ENCODE measurements at regions of chr6 and their contacts with region 1.

Region 1: DNA sequence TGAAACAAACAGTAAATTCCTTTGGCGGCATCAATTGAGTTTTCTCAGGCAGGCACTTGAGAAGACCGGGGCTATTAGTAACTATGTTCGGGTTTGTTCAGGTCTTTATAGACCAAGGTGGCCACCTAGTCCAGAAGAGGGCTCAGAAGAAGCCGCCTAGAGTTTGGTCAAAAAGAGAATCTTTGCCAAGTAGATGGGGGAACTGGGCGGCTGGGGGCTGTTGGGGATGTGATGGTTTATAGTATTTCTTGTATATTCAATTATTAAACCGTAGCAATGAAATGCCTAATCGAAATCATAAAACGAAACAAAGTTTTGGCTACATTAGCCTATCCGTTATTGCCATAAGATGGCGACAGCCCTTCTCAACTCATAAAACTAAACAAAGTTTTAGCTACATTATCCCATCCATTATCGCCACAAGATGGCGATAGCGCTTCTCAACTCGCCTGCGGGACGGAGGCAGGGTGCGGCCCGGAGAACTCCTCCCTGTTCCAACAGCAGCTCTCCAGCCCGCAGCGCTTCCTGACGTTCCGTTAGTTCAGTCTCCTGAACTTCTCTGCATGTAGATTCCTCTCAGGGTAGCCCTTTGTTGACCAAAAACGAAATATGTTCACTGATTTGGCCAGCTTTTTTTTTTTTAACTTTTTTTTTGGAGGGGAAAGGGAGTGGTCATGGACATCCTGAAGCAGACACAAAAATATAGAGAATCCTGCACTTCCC is 120.5 kb upstream of the PRSS16 start:
- DNase-seq: peak; percentile 91
- H3K4me3 Mint-ChIP-seq: peak overlapping the region; percentile 71
- H3K27ac Mint-ChIP-seq: peak overlapping the region; percentile 54
- H3K4me1 Mint-ChIP-seq: peaks cover 7% of the 10 kb centered on the region
- H3K27me3 Mint-ChIP-seq: no peaks in the 10 kb centered on the region
- CTCF ChIP-seq: peak; percentile 66

Region 2: DNA sequence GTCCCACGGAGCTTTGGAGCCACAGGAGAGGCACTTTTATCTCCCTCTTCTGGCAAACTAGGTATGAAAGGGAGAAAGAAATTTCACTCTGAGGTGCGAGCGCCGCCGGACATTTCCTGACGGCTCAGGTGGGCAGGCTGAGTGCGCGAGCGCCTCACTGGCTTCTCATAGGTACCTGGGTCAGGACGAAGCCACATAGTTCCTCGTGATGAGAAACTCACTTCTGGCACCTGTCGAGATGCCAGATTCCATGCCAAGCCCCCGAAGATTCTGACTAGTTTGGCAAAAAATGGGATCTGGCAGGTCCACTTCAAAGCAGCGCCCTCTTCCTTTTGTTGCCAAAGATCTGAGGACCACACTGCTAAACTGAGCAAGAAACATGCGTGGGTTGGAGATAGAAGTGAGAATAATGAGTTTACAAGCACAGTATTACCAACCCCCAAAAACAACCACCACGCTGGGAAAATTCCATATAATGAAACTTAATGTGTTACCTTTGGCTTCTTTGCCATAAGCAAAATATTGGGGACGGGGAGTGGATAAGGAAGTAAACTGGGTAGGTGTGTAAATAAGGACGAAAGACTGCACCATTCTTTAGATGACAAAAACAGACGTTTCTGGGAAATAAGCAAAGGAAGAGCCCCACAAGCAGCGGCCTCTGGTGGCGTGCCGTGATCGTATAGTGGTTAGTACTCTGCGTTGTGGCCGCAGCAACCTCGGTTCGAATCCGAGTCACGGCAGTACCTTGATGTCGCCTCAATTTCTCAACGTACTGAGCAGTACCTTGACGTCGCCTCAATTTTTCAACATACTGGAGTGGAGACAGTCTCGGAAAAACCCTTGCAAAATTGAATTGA is 30.7 kb after region 1 on chr6:
- CTCF ChIA-PET with region 1: interaction called, 8 read pairs
- POLR2A ChIA-PET with region 1: interaction called, 621 read pairs
- intact Hi-C with region 1: loop called (anchors 1 kb)
- DNase-seq: peak; percentile 66
- H3K4me3 Mint-ChIP-seq: peak overlapping the region; percentile 80
- H3K27ac Mint-ChIP-seq: peak overlapping the region; percentile 53
- H3K4me1 Mint-ChIP-seq: peaks cover 29% of the 10 kb centered on the region
- H3K27me3 Mint-ChIP-seq: no peaks in the 10 kb centered on the region
- CTCF ChIP-seq: peak; percentile 31

Measured in MCF 10A (cell line).